Stomach (tissue), 19 donors: ENCODE measurements at regions of chr14 and their contacts with region 1.

Region 1: GRCh38 chr14:104657101-104657524 is 32.3 kb upstream of the INF2 start:
- DNase-seq: no peak
- H3K4me3 ChIP-seq: no peak overlapping the region
- H3K27ac ChIP-seq: no peak overlapping the region
- H3K4me1 ChIP-seq: peaks cover 0 to 12% (median 3%) of the 10 kb centered on the region in 4 donors
- H3K27me3 ChIP-seq: peaks cover 0 to 25% (median 10%) of the 10 kb centered on the region in 3 donors
- CTCF ChIP-seq: no peak
- EP300 ChIP-seq: no peak
- POLR2A ChIP-seq: no peak

Region 2: DNA sequence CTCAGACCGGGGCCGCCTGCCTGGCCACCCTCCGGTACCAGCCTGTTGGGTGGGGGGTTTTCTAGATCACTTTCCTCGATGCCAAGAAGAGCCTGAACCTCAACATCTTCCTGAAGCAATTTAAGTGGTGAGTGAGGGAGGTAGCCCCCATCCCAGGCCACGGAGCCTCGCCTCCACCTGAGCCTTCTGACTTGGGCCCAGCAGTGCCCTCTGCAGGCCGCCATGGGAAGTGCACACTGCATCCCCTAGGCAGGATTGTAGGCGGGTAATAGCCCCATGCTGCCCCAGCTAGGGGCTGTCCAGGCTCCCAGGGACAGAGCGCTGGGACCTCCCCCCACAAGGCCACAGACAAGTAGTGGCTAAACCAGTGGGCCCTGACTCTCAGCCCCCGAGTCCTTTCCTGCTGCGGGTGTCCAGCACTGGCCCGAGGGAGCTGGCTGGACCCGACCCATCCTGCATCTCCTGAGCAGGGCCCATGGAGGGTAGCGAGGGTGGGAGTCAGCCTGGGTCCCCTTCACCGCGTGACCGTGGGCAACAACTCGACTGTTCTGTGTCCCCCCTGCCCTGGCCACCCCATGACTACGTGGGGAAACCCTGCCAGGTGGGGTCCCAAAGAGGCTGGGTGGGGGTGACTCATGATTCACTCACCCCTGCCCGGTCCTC is 51.6 kb after region 1 on chr14:
- intact Hi-C with region 1: loop called (anchors 5 kb)
- DNase-seq: peak; percentile 81 to 89
- H3K4me3 ChIP-seq: no peak overlapping the region
- H3K27ac ChIP-seq: no peak overlapping the region
- H3K4me1 ChIP-seq: peaks cover 4 to 24% (median 16%) of the 10 kb centered on the region in 4 donors
- H3K27me3 ChIP-seq: no peaks in the 10 kb centered on the region
- CTCF ChIP-seq: peak in 6 of 7 experiments; percentile 64 to 99 (median 98)
- EP300 ChIP-seq: no peak
- POLR2A ChIP-seq: no peak